Tibial artery (tissue), 4 donors: ENCODE measurements at regions of chr10 and their contacts with region 1.

Region 1: GRCh38 chr10:113027574-113028455 is 77.8 kb downstream of the TCF7L2 start:
- DNase-seq: no peak
- H3K4me3 ChIP-seq: peak overlapping the region; percentile 4 to 6
- H3K27ac ChIP-seq: peak overlapping the region; percentile 46 to 80
- H3K4me1 ChIP-seq: peaks cover 0 to 86% (median 54%) of the 10 kb centered on the region in 4 donors
- H3K27me3 ChIP-seq: no peaks in the 10 kb centered on the region
- CTCF ChIP-seq: no peak

Region 2: DNA sequence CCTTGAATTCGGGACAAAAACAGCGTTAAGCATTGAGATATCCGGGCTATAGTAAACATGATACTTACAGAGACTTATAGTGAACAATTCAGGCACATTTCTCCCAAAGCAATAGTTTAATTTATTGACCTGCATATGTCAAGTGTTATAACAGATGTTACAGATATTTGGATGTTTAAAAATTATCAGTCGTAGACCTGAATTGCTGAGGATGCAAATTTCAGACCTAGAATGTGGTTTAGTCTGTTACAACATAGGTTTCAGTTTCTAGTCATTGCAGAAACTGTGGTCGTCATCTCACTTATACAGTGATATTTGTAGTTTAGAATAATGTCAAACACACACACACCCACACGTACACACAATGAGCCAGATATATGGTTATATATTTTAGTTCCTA is 495.6 kb before region 1 on chr10:
- intact Hi-C with region 1: no loop called
- DNase-seq: no peak
- H3K4me3 ChIP-seq: peak overlapping the region in 1 of 2 donors; percentile 11
- H3K27ac ChIP-seq: no peak overlapping the region
- H3K4me1 ChIP-seq: no peaks in the 10 kb centered on the region
- H3K27me3 ChIP-seq: no peaks in the 10 kb centered on the region
- CTCF ChIP-seq: no peak

Region 3: GRCh38 chr10:112783351-112784021 is 244.3 kb before region 1 on chr10:
- intact Hi-C with region 1: no loop called
- DNase-seq: no peak
- H3K4me3 ChIP-seq: no peak overlapping the region
- H3K27ac ChIP-seq: no peak overlapping the region
- H3K4me1 ChIP-seq: peaks cover 0 to 9% (median 3%) of the 10 kb centered on the region in 4 donors
- H3K27me3 ChIP-seq: no peaks in the 10 kb centered on the region
- CTCF ChIP-seq: no peak

Region 4: GRCh38 chr10:112949875-112950507 is 77.8 kb before region 1 on chr10 and contains the start of gene TCF7L2:
- intact Hi-C with region 1: loop called (anchors 10 kb)
- DNase-seq: peak; percentile 98 to 99
- H3K4me3 ChIP-seq: peak within 1 kb of the TSS; percentile 75 to 85
- H3K27ac ChIP-seq: peak within 1 kb of the TSS; percentile 95 to 96
- H3K4me1 ChIP-seq: peaks cover 0 to 56% (median 27%) of the 10 kb centered on the region in 4 donors
- H3K27me3 ChIP-seq: no peaks in the 10 kb centered on the region
- CTCF ChIP-seq: no peak

Region 5: DNA sequence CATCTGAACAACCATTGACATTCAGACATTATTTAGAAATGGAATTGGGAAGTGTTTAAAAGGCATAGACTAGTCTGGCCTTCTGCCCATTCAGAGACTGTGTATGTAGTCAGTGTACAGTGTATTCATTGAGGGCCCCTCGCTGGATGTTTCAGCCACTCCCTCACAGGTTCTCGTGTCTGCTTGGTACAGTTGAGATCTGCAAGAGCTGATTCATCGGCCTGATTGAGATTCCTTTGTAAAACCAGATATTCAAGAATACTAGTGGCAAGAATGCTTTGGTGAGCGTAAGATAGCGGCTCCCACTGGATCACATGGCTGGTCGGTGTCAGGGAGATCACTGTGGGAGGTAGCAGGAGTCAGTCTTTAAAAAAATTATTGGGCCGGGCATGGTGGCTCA is 41.8 kb after region 1 on chr10:
- intact Hi-C with region 1: loop called (anchors 5 kb)
- DNase-seq: no peak
- H3K4me3 ChIP-seq: no peak overlapping the region
- H3K27ac ChIP-seq: peak overlapping the region; percentile 84 to 86
- H3K4me1 ChIP-seq: peaks cover 0 to 91% (median 79%) of the 10 kb centered on the region in 4 donors
- H3K27me3 ChIP-seq: no peaks in the 10 kb centered on the region
- CTCF ChIP-seq: no peak

Region 6: DNA sequence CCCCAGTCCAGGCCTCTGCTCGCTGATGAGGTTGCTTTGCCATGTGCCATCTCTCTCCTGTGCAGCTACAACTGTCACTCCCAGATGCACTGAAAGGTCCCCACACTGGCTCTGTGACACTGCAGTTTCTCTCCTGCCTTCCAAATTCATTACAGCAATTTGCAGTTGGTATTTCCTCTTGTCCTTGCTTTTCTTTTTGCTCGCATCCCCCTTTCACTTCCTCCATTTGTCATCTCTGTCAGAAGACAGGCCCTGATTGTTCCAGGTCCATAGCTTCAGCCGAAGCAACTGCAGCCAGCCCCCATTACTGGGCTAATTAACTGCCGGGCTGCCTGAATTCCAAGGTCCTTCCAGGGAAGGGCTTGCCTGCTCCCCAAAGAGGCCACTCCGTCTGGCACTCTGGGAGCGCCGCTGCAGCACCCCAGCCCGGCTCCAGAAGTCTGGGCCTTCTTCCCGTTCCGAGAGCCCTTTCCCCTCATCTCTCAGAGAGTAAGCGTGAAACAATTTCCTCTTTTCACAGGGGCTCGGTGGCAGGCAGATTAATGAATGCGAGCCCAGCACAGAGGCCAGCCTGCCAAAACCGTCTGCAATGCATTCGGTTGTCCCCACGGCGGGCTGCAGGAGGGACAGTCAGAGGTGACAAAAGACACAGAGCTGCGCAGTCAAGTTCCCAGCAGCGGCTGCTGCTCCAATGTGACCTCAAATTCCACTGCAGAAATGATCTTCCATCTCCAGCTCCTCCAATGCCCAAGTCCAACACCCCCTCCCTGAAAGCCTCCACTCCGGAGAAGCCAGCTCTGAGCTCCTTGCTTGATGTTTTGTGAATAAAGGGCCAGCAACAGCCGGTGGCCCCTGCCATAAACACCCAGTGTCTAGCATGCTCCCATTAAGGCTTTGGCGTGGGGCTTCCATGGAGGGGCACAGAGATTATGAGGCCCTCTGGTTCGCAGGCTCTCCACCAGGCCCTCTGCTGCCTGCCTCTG is 245.7 kb after region 1 on chr10:
- intact Hi-C with region 1: no loop called
- DNase-seq: peak; percentile 42 to 74
- H3K4me3 ChIP-seq: peak overlapping the region in 1 of 2 donors; percentile 27
- H3K27ac ChIP-seq: peak overlapping the region; percentile 69 to 82
- H3K4me1 ChIP-seq: peaks cover 0 to 25% (median 18%) of the 10 kb centered on the region in 4 donors
- H3K27me3 ChIP-seq: no peaks in the 10 kb centered on the region
- CTCF ChIP-seq: no peak